ENCODE measurements at regions of chr6 and their contacts with region 1.

Region 1: GRCh38 chr6:152642989-152643388 is 5.8 kb upstream of the SYNE1 start:
- DNase-seq: peak; percentile 56
- H3K4me3 ChIP-seq: no peak overlapping the region
- H3K27ac ChIP-seq: no peak overlapping the region
- H3K4me1 ChIP-seq: no peaks in the 10 kb centered on the region
- H3K27me3 ChIP-seq: peaks cover under 1% of the 10 kb centered on the region
- CTCF ChIP-seq: peak; percentile 68 to 85

Region 2: GRCh38 chr6:152484806-152485205 is 158.2 kb before region 1 on chr6:
- CTCF ChIA-PET with region 1: interaction called, 16 read pairs
- dilution Hi-C with region 1: no loop called
- in situ Hi-C with region 1: loop called in 1 of 2 experiments (anchors 10 kb)
- intact Hi-C with region 1: loop called (anchors 1 kb)
- DNase-seq: no peak
- H3K4me3 ChIP-seq: no peak overlapping the region
- H3K27ac ChIP-seq: no peak overlapping the region
- H3K4me1 ChIP-seq: no peaks in the 10 kb centered on the region
- H3K27me3 ChIP-seq: no peaks in the 10 kb centered on the region
- CTCF ChIP-seq: no peak

Region 3: DNA sequence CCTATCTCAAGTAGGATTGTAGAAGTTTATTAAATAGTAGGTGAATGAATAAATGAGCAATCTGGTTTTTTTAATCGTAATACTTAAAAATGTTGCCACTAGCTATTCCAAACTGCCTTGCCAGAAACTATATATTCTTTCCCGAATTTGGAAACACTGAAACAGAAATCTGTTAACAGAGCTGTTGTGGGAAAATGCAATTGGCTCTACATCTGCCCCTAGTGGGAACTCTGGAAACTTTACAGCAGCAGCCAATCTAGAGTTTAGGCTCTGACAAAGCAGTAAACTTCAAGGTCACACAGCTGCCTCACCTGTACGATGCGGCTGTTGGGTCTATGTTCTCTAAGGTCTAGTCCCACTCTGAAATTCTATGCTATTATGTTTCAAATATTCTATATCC is 47.5 kb before region 1 on chr6:
- CTCF ChIA-PET with region 1: no interaction called
- dilution Hi-C with region 1: no loop called
- in situ Hi-C with region 1: no loop called
- intact Hi-C with region 1: no loop called
- DNase-seq: no peak
- H3K4me3 ChIP-seq: no peak overlapping the region
- H3K27ac ChIP-seq: no peak overlapping the region
- H3K4me1 ChIP-seq: no peaks in the 10 kb centered on the region
- H3K27me3 ChIP-seq: no peaks in the 10 kb centered on the region
- CTCF ChIP-seq: peak; percentile 49 to 58

Region 4: DNA sequence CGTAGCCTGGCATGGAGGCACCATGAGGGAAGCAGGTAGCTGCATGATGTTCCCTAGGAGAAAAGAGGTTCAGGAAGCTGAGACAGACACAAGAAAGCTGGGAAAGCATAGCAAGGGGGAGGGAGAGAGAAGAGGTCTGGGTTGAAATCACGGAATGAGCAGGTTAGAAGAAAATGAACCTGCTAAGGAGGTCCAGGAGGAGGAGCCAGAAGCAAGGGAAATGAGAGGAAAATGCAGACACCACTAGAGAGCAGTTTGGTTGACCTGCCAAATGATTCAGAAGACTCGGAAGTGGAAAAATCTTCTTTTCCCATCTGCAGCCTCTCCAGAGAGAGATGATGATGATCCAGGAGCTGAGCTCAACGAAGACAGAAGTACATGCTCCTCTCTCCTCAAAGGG is 178.5 kb after region 1 on chr6:
- CTCF ChIA-PET with region 1: interaction called, 19 read pairs
- dilution Hi-C with region 1: no loop called
- in situ Hi-C with region 1: no loop called
- intact Hi-C with region 1: no loop called
- DNase-seq: no peak
- H3K4me3 ChIP-seq: no peak overlapping the region
- H3K27ac ChIP-seq: no peak overlapping the region
- H3K4me1 ChIP-seq: no peaks in the 10 kb centered on the region
- H3K27me3 ChIP-seq: no peaks in the 10 kb centered on the region
- CTCF ChIP-seq: no peak

Region 5: DNA sequence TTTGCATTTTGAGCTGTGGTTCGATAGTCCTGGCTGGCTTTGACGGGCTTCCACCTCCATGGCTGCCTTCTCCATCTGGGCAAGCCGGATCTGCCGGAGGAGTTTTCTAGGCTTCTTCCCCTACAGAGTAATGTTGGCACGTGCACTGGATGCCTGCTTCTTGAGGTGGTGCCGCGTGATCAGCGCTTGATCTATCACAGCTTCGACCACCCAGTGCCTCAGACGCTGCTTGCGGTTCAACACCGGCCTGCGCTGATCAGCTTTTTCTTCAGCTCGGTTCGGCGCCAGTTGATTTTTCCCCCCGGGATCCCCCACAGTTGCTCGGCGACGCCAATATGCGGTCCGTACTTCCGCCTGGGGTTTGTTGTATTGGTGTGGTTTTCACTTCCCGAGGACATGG is 316.3 kb after region 1 on chr6:
- CTCF ChIA-PET with region 1: interaction called, 18 read pairs
- dilution Hi-C with region 1: no loop called
- in situ Hi-C with region 1: no loop called
- intact Hi-C with region 1: no loop called
- DNase-seq: no peak
- H3K4me3 ChIP-seq: no peak overlapping the region
- H3K27ac ChIP-seq: no peak overlapping the region
- H3K4me1 ChIP-seq: no peaks in the 10 kb centered on the region
- H3K27me3 ChIP-seq: peaks cover 2% of the 10 kb centered on the region
- CTCF ChIP-seq: no peak

Region 6: GRCh38 chr6:153218184-153218792 is 575.3 kb after region 1 on chr6:
- CTCF ChIA-PET with region 1: no interaction called
- dilution Hi-C with region 1: no loop called
- in situ Hi-C with region 1: no loop called
- intact Hi-C with region 1: no loop called
- DNase-seq: no peak
- H3K4me3 ChIP-seq: no peak overlapping the region
- H3K27ac ChIP-seq: no peak overlapping the region
- H3K4me1 ChIP-seq: no peaks in the 10 kb centered on the region
- H3K27me3 ChIP-seq: no peaks in the 10 kb centered on the region
- CTCF ChIP-seq: no peak

Measured in mammary epithelial cell (primary cell).